PC-3 (cell line): ENCODE measurements at regions of chr10 and their contacts with region 1.

Region 1: GRCh38 chr10:28137907-28138880 is 139.3 kb upstream of the ODAD2 start:
- DNase-seq: peak; percentile 55
- ATAC-seq: peak; percentile 58
- H3K4me3 ChIP-seq: no peak overlapping the region
- H3K27ac ChIP-seq: peak overlapping the region; percentile 12; the same call in 1 of the 2 replicates
- H3K4me1 ChIP-seq: peaks cover 24% of the 10 kb centered on the region
- H3K27me3 ChIP-seq: no peaks in the 10 kb centered on the region
- CTCF ChIP-seq: no peak

Region 2: DNA sequence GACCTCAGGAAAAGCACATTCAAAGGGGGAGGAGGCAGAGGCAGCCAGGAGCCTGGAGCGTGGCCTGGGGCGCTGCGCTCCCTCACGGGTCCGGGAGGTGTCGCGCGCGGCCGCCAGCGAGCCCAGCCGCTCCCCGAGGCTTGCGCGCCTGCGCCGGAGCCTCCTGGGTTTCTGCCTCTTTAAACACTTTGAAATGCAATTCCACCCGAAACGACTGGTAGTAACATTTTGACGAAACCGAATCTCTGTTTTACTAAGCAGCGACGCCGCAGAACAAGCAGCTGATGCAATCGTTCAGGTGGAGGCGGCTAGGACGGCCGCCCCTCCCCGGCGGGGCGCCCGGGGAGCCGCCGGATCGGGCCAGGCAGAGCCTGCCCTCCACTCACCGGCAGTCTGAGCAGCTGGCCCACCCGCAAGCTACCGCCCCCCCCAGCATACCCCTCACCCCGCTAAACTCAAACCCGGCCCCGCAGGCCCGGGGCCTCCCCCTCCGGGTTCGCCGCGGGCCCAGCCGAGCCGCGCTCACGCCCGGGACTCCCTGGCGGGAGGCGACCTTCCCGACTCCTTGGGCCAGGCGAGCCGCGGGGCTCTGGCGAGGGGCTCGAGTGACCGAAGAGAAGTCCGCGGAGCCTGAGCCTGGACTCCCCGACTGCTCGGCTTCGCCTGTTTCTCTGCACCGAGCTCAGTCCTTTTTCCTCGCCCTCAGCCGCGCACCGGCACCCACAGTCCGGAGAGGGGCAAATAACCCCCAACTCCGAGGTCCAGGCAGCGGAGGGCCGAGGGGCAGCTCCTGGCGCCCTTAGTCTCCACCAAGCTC is 395.8 kb before region 1 on chr10:
- CTCF ChIA-PET with region 1: no interaction called
- POLR2A ChIA-PET with region 1: no interaction called
- intact Hi-C with region 1: loop called (anchors 5 kb)
- DNase-seq: peak; percentile 75
- ATAC-seq: peak; percentile 48
- H3K4me3 ChIP-seq: peak overlapping the region; percentile 86
- H3K27ac ChIP-seq: peak overlapping the region; percentile 68
- H3K4me1 ChIP-seq: peaks cover 16% of the 10 kb centered on the region; the same call in 1 of the 2 replicates
- H3K27me3 ChIP-seq: peaks cover 16% of the 10 kb centered on the region
- CTCF ChIP-seq: peak; percentile 65

Region 3: DNA sequence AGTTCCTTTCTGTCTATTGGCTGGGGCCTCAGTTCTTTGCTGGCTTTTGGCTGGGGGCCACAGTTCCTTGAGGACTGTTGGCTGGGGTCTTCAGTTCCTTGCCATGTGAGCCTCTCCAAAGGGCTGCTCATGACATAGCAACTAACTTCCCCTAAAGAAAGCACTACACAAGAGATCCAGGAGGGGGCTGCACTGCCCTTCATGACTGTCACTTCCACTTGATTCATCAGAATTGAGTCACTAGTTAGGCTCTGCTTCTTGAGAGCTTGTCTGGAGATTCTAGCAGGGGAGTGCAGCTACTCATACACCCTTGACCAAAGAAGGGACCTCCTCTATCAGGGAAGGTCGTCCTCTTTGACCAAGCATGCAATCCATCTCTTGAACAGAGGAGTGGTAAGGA is 354.5 kb before region 1 on chr10:
- CTCF ChIA-PET with region 1: interaction called, 6 read pairs
- POLR2A ChIA-PET with region 1: no interaction called
- intact Hi-C with region 1: loop called (anchors 1 kb)
- DNase-seq: peak; percentile 78
- ATAC-seq: peak; percentile 95
- H3K4me3 ChIP-seq: no peak overlapping the region
- H3K27ac ChIP-seq: no peak overlapping the region
- H3K4me1 ChIP-seq: peaks cover 3% of the 10 kb centered on the region; the same call in 1 of the 2 replicates
- H3K27me3 ChIP-seq: no peaks in the 10 kb centered on the region
- CTCF ChIP-seq: peak; percentile 74

Region 4: DNA sequence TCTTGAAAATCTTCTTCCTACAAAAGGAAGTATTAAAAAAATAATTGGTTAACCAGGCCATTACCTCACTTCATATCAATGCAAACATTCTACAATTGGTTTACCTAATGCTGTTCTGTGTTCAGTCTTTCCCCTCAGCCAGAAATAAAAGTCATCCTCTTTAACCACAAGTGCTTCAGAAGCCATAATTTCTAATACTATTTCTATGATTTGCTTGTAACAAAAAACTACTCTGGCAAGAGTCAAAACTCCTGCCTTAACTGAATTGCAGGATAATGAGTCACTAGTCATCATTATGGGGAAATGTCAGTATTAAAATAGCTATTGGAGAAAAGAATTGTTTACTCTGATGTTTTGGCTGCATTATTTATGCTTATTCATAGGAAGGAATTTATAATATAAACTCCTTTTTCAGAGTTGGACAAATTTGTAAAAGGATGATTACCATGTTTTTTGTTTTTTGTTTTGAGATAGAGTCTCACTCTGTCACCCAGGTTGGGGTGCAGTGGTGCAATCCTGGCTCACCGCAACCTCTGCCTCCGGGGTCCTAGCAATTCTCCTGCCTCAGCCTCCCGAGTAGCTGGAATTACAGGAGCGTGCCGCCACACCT is 83.9 kb before region 1 on chr10:
- CTCF ChIA-PET with region 1: no interaction called
- POLR2A ChIA-PET with region 1: no interaction called
- intact Hi-C with region 1: loop called (anchors 5 kb)
- DNase-seq: peak; percentile 90
- ATAC-seq: peak; percentile 88
- H3K4me3 ChIP-seq: 0 out of 2 replicates have a peak overlapping the region, but pooled peaks have one; percentile 29
- H3K27ac ChIP-seq: peak overlapping the region; percentile 89
- H3K4me1 ChIP-seq: peaks cover 27% of the 10 kb centered on the region
- H3K27me3 ChIP-seq: no peaks in the 10 kb centered on the region
- CTCF ChIP-seq: no peak

Region 5: DNA sequence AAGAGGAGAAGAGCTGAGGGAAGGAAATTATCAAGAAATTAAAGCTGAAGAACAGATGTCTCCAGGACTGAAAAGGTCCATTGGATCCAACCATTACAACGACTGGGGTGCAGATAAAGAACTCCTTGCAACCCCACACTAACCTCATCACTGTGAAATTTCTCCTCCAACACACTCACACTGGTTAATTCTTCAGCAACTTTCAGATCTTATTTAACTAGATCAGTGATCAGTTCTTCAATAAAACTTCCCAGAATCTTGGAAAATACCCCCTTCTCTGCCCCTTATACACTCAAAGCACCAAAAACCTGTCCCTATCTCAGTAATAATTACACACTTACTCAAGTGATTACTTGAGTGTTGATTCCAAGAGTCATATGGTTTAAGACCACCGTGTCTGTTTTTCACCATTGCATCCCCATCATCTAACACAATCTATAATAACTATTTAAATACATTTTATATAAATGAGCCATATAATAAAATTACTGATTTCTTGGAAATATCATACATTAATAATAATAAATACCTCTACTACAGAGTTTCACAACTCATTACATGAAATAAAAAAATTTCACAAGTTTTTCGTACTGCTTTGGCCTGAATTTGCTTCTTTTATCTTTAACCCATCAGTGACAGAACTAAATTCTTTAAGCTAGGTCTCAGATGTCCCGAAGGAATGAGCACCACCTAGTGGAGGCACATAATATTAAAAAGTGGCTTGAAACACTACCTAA is 41.0 kb after region 1 on chr10:
- CTCF ChIA-PET with region 1: interaction called, 3 read pairs
- POLR2A ChIA-PET with region 1: interaction called, 3 read pairs
- intact Hi-C with region 1: loop called (anchors 5 kb)
- DNase-seq: peak; percentile 78
- ATAC-seq: peak; percentile 49; the same call in 1 of the 2 replicates
- H3K4me3 ChIP-seq: no peak overlapping the region
- H3K27ac ChIP-seq: no peak overlapping the region
- H3K4me1 ChIP-seq: peaks cover 25% of the 10 kb centered on the region; the same call in 1 of the 2 replicates
- H3K27me3 ChIP-seq: no peaks in the 10 kb centered on the region
- CTCF ChIP-seq: peak; percentile 74

Region 6: DNA sequence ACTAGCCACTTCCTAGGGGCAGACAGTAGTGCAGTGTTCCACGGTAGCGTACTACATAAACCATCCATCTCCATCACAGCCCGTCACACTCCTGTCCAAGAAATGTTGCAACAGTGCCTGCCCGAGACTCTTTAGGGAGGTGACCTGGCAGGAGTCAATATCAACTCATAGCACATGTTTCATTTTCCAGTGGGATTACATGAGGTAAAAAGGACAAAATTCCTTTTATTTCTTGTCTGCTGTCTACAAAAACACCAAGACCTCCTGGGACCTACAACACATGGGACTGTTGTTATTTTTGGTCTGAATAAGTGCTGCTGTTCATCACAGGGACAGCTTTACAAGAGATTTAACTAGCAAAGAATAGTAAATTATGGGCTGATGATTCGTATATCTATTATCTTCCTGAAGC is 64.8 kb after region 1 on chr10:
- CTCF ChIA-PET with region 1: interaction called, 5 read pairs
- POLR2A ChIA-PET with region 1: no interaction called
- intact Hi-C with region 1: loop called (anchors 1 kb)
- DNase-seq: peak; percentile 4
- ATAC-seq: no peak
- H3K4me3 ChIP-seq: no peak overlapping the region
- H3K27ac ChIP-seq: peak overlapping the region; percentile 99
- H3K4me1 ChIP-seq: peaks cover 39% of the 10 kb centered on the region
- H3K27me3 ChIP-seq: no peaks in the 10 kb centered on the region
- CTCF ChIP-seq: no peak

Region 7: DNA sequence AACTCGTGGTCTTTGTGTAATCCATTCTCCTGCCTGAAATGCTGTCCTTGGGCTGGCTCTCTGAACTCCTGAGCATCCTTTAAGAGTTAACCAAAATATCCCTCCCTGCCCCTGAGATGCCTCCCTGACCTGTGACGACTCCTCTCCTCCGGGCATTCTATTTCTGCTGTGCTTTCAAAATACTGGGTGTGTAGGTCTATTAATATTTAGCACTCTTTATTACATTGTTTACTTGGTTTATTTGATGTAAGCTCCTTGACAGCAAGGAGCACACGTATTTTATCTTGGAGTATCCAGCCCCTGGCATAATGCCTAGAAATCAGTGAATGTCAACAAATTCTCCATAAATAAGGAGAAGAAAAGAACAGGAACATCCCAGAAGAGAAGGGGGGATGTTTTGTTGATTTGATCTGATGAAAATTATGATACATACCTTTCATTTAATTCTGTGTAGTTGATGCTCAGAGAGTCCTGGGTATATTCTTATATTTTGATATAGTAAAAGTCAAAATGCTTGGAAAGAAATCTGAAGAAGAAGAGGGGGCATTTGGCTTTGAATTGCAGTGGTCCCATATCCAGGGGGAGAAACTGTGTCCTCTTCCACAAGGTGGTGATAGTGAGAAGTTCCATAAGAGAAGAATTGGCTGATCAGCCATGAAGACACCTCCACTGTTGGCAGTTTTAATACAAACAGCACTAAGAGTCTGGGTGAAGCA is 272.4 kb after region 1 on chr10:
- CTCF ChIA-PET with region 1: no interaction called
- POLR2A ChIA-PET with region 1: no interaction called
- intact Hi-C with region 1: no loop called
- DNase-seq: peak; percentile 22
- ATAC-seq: no peak; the same call in 1 of the 2 replicates
- H3K4me3 ChIP-seq: no peak overlapping the region
- H3K27ac ChIP-seq: no peak overlapping the region
- H3K4me1 ChIP-seq: no peaks in the 10 kb centered on the region
- H3K27me3 ChIP-seq: no peaks in the 10 kb centered on the region
- CTCF ChIP-seq: peak; percentile 44